ENCODE measurements at regions of chr1 and their contacts with region 1.

Region 1: DNA sequence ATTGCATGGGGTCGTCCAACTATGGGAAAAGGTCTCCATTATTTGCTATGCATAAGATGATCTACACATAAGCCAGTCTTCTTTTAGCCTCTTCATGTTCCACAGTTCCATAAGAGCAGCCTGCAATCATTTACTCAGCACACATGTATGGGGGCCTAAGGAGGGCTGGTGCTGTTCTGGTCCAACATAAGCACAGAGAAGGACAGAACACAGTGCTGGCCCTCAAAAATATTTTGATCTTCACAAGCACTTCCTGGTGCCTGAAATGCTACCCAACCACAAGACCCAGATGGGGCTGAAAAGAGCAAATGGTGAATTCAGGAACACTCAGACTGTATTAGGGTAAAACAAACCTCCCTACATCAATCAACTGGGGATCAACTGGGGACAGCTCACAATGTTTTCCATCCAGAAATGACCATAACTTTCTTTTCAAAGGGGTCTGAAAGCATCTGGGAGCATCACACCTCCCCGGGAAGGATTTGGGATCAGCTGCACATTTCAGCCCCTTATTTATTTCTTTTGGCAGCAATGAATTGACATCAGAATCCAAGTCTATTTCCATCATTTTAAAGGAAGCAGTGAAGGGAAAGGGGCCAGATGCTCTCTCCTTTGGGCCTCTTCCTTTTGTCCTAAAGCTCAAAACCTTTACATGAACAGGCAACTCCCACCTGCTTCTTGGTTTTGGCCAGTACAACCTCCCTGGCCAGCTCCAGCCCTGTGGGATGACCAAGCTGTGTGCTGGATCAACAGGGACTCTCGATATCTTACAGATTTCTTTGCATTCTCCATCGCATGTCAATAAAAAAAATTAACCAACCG is 45.7 kb downstream of the KCNN3 start:
- DNase-seq: no peak
- H3K4me3 ChIP-seq: no peak overlapping the region
- H3K27ac ChIP-seq: no peak overlapping the region
- H3K4me1 ChIP-seq: peaks cover 13% of the 10 kb centered on the region
- CTCF ChIP-seq: no peak

Region 2: DNA sequence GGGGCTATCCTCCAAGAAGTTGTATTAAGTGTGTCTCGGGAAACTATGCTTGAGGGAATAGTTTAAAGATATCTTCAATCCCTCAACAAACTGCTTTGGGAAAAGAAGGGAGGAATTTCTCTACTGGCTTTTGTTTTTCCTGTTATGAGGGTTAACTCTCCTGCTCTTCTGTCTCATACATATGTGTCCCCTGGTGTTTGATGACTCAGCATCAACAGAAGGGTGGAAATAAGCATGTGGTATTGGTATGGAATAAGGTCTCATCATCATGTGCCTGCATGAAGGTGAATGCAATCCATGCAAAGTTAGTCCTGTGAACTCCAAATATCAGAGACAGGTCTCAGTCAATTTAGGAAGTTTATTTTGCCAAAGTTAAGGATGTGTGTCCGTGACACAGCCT is 189.2 kb before region 1 on chr1:
- CTCF ChIA-PET with region 1: no interaction called
- POLR2A ChIA-PET with region 1: no interaction called
- intact Hi-C with region 1: no loop called
- DNase-seq: no peak
- H3K4me3 ChIP-seq: no peak overlapping the region
- H3K27ac ChIP-seq: no peak overlapping the region
- H3K4me1 ChIP-seq: no peaks in the 10 kb centered on the region
- CTCF ChIP-seq: no peak

Region 3: DNA sequence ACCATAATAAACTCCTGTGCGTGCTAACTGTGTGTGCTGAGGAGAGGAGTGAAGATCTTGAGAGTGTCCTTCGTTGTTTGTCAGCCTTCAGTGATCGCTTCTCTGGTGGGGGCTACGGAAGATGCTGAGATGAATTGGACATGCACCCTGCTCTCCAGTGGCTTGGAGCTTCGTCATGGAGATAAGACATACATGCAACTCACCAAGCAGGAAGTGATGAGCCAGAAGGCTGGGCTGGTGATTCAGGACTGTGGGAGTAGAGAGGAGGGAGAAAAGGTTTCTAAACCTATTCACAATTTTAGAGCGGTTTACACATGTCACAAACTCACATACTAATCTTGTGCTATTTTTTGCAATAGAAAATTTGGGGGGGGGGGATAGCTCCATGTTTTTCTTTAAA is 87.5 kb before region 1 on chr1:
- CTCF ChIA-PET with region 1: no interaction called
- POLR2A ChIA-PET with region 1: no interaction called
- intact Hi-C with region 1: no loop called
- DNase-seq: no peak
- H3K4me3 ChIP-seq: no peak overlapping the region
- H3K27ac ChIP-seq: no peak overlapping the region
- H3K4me1 ChIP-seq: no peaks in the 10 kb centered on the region
- CTCF ChIP-seq: no peak

Region 4: DNA sequence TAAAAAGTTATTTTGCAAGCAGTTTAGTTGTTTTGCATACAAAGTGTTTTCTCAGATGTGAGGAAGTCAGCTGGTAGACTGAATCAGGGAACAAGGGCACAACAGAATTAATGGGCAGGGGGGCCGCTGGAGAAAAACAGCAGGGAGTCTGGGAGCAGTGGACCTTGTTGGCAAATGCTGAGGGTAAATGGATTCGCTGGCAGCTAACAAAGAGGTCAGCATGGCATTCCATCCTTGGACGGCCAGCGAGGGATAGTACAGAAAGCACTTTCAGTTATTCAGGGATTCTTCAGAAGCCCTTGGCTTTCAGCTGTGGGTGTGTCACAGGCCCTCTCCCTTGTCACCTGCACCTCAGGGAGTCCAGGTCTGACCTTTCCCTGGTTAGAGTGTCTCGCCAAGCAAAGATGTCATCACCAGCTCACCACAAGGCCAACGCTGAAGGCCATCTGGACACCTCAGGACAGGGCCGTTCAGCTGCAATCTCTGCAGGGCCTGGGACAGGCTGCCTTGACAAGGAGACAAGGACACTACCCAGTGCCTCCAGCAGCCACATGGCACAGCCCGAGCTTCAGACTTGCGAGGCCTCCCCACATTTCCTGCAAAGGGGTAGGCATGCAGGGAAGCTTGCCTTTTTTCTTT is 44.7 kb before region 1 on chr1:
- CTCF ChIA-PET with region 1: no interaction called
- POLR2A ChIA-PET with region 1: interaction called, 10 read pairs
- intact Hi-C with region 1: no loop called
- DNase-seq: no peak
- H3K4me3 ChIP-seq: no peak overlapping the region
- H3K27ac ChIP-seq: no peak overlapping the region
- H3K4me1 ChIP-seq: peaks cover 4% of the 10 kb centered on the region
- CTCF ChIP-seq: no peak

Measured in OCI-LY7 (cell line).